Activated CD4-positive, alpha-beta T cell treated with anti-CD3 and anti-CD28 coated beads for 36 hours (primary cell): ENCODE measurements at regions of chr12 and their contacts with region 1.

Region 1: DNA sequence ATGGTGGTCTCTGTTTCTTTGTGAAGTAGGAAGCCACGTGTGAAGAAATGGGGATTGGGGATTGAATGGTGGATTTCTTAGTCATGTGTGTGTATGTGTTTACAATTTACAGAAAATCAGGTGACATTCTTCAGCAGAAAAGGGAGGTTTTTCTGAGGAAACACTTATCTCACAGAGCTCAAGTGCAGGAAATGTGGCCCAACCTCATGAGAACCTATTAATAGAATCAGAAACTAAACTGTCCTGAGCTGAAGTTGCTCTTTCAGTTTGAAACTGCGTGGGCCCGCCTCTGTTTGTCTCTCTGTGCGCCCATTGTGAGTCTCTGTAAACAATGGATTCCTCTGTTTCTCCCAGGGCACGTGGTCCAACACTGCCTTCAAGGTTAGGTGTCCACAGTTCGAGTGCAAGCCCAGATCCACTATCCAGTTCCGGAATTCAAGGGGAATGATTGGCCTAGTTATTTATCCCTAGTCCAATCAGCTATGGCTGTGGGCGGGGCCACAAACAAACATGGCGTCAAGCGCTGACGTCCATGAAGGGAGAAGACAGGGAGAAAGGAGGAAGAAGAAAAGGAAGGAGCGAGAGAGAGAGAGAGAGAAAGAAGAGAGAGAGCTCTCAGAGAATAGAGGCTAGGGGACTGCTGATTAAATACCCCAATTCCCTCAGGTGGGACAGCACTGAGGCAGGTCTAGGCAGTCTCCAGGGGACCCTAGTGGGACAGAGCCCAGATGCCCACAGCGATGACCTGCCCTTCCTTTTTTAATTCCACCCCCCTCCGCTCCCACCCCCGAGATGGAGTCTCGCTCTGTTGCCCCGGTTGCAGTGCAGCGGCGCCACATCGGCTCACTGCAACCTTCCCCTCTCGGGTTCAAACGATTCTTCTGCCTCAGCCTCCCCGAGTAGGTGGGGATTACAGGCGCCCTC is 31.4 kb upstream of the C12orf76 start:
- DNase-seq: peak; percentile 83
- ATAC-seq: peak; percentile 91
- H3K4me3 Mint-ChIP-seq: peak overlapping the region; percentile 57
- H3K27ac Mint-ChIP-seq: peak overlapping the region; percentile 94
- H3K4me1 Mint-ChIP-seq: peaks cover 30% of the 10 kb centered on the region
- H3K27me3 Mint-ChIP-seq: no peaks in the 10 kb centered on the region

Region 2: GRCh38 chr12:109899783-109900751 is 179.7 kb before region 1 on chr12 and contains the start of gene TCHP:
- CTCF ChIA-PET with region 1: no interaction called
- POLR2A ChIA-PET with region 1: no interaction called
- intact Hi-C with region 1: no loop called
- DNase-seq: peak; percentile 88
- ATAC-seq: peak; percentile 90
- H3K4me3 Mint-ChIP-seq: peak within 1 kb of the TSS; percentile 92
- H3K27ac Mint-ChIP-seq: peak within 1 kb of the TSS; percentile 100
- H3K4me1 Mint-ChIP-seq: peaks cover 25% of the 10 kb centered on the region
- H3K27me3 Mint-ChIP-seq: no peaks in the 10 kb centered on the region
- total RNA-seq, gene TCHP: 15.1 to 16.1 TPM

Region 3: GRCh38 chr12:110048242-110049027 is 31.3 kb before region 1 on chr12 and contains the start of gene C12orf76:
- CTCF ChIA-PET with region 1: interaction called, 3 read pairs
- POLR2A ChIA-PET with region 1: interaction called, 3 read pairs
- intact Hi-C with region 1: loop called (anchors 1 kb)
- DNase-seq: peak; percentile 95
- ATAC-seq: peak; percentile 100
- H3K4me3 Mint-ChIP-seq: peak within 1 kb of the TSS; percentile 78
- H3K27ac Mint-ChIP-seq: peak within 1 kb of the TSS; percentile 94
- H3K4me1 Mint-ChIP-seq: peaks cover 28% of the 10 kb centered on the region
- H3K27me3 Mint-ChIP-seq: no peaks in the 10 kb centered on the region
- total RNA-seq, gene C12orf76: 10.2 to 10.5 TPM

Region 4: DNA sequence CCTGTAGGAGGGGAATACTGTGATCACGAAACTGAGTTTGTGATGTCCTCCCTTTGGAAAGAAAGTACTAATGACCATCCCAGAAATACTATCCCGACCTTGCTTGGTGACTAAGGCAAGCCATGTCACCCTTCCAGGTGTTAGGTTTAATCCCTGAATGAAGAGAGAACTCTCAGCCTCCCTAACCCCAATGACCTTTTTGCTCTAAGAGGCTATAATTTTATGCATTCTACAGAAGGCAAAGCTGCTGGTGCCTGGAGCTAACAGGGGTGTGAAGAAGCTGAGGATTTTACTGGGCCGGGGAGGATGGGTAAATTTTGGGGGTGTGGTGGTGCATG is 23.6 kb before region 1 on chr12:
- CTCF ChIA-PET with region 1: interaction called, 3 read pairs
- POLR2A ChIA-PET with region 1: interaction called, 3 read pairs
- intact Hi-C with region 1: loop called in 1 of 2 experiments (anchors 1 kb)
- DNase-seq: no peak
- ATAC-seq: no peak
- H3K4me3 Mint-ChIP-seq: no peak overlapping the region
- H3K27ac Mint-ChIP-seq: peak overlapping the region; percentile 1
- H3K4me1 Mint-ChIP-seq: peaks cover 42% of the 10 kb centered on the region
- H3K27me3 Mint-ChIP-seq: no peaks in the 10 kb centered on the region